ENCODE measurements at regions of chr16 and their contacts with region 1.

Region 1: DNA sequence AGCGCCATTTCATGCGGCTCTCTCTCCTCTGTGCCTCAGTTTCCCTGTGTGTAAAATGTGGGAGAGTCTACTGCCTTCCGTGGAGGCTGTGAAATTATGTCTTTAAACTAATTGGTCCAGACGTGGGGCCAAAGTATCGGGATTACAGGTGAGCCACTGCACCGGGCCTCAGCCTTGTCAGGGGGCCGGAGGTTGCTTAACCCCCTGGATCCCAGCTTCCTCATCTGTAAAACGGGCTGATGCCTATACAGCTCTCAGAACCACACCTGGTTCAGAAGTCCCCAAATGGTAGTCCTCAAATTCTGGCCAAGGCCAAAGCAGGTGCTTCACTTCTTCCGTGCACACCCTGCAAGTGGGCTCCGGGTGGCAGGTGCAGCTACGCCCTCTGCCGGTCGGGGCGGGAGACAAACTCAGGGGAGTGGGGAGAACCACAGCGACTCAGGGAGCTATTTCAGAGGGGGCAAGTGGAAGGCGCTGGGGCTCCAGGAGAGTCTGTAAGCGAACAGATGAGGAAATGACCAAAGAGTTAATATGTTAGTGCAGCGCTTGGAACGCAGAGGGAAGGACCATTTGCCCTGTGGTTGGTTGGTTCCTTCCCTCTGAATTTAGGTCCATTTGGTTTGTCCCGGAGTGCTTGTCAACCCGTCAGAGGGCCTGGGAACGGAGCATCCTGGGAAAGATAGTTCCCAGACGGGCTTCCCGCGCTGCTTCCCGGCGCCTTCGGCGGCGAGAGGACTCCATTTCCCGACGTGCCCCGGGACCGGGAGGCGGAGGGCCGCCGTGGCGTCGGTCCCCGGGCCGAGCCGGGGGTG is at the start of gene MGRN1:
- DNase-seq: peak; percentile 96
- ATAC-seq: peak; percentile 89
- H3K4me3 Mint-ChIP-seq: peak within 1 kb of the TSS; percentile 99
- H3K27ac Mint-ChIP-seq: peak within 1 kb of the TSS; percentile 100
- H3K4me1 Mint-ChIP-seq: peaks cover 38% of the 10 kb centered on the region
- H3K27me3 Mint-ChIP-seq: no peaks in the 10 kb centered on the region
- total RNA-seq, gene MGRN1: 65.0 to 75.4 TPM

Region 2: DNA sequence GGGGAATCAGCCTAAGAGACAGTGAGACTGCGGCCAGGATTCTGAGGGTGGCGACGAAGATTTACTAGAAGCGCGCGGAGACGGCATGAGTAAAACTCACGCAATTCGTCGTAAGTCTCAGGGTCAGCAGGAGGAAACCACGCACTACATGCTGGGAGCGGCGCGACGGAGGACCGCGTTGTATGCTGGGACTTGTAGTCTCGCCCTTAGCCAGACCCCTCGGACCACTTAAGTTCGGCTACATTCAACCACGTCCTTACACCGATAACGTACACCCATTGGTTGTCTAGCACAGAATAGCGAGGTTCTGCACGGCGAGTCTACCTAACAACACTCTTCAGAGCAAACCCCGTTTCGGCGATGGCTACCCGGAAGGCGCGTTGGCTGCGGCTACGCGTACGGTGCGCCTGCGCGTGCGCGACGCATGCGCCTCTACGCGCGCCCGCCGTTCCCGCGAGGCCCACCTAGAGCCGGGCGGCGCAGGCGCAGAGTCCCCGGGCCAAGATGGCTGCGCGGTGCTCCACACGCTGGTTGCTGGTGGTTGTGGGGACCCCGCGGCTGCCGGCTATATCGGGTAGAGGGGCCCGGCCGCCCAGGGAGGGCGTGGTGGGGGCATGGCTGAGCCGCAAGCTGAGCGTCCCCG is 198.7 kb before region 1 on chr16 and contains the start of gene DNAJA3:
- CTCF ChIA-PET with region 1: interaction called, 3 read pairs
- POLR2A ChIA-PET with region 1: no interaction called
- intact Hi-C with region 1: loop called in 1 of 2 experiments (anchors 2 kb)
- DNase-seq: peak; percentile 96
- ATAC-seq: peak; percentile 93
- H3K4me3 Mint-ChIP-seq: peak within 1 kb of the TSS; percentile 95
- H3K27ac Mint-ChIP-seq: peak within 1 kb of the TSS; percentile 98
- H3K4me1 Mint-ChIP-seq: peaks cover 27% of the 10 kb centered on the region
- H3K27me3 Mint-ChIP-seq: no peaks in the 10 kb centered on the region
- total RNA-seq, gene DNAJA3: 93.9 to 102 TPM

Region 3: GRCh38 chr16:4649744-4650442 is 25.7 kb after region 1 on chr16:
- CTCF ChIA-PET with region 1: interaction called, 15 read pairs
- POLR2A ChIA-PET with region 1: interaction called, 3 read pairs
- intact Hi-C with region 1: no loop called
- DNase-seq: peak; percentile 53
- ATAC-seq: peak; percentile 54
- H3K4me3 Mint-ChIP-seq: no peak overlapping the region
- H3K27ac Mint-ChIP-seq: peak overlapping the region; percentile 37
- H3K4me1 Mint-ChIP-seq: peaks cover 31% of the 10 kb centered on the region
- H3K27me3 Mint-ChIP-seq: no peaks in the 10 kb centered on the region

Region 4: DNA sequence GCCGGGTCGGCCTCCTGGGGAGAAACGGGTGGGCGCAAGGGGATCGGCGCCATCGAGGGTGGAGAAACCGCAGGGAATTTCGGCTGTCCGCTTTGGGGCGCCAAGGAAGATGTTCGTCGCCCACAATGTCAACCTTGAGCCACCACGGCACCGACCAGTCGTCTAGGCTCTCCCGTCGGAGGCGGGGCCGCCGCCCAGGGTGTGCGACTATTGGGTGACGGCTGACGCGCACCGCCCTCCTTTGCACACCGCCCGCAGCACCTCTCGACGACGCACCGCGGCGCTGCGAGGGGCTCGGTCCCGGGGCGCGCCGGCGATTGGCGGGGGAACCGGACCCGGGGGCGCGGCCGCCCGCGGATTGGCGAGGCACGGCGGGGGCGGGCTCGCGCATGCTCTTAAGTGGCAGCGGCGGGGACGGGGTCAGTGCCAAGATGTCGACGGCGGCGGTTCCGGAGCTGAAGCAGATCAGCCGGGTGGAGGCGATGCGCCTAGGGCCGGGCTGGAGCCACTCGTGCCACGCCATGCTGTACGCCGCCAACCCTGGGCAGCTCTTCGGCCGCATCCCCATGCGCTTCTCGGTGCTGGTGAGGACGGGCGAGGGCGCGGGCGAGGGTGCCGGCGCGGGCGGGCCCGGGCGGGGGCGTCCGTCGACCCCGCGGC is 69.2 kb after region 1 on chr16 and contains the start of gene NUDT16L1:
- CTCF ChIA-PET with region 1: interaction called, 3 read pairs
- POLR2A ChIA-PET with region 1: no interaction called
- intact Hi-C with region 1: loop called (anchors 1 to 2 kb)
- DNase-seq: peak; percentile 98
- ATAC-seq: peak; percentile 95
- H3K4me3 Mint-ChIP-seq: peak within 1 kb of the TSS; percentile 77
- H3K27ac Mint-ChIP-seq: peak within 1 kb of the TSS; percentile 83
- H3K4me1 Mint-ChIP-seq: peaks cover 17% of the 10 kb centered on the region
- H3K27me3 Mint-ChIP-seq: no peaks in the 10 kb centered on the region
- total RNA-seq, gene NUDT16L1: 16.4 to 22.5 TPM

Region 5: GRCh38 chr16:4802659-4803287 is 178.6 kb after region 1 on chr16:
- CTCF ChIA-PET with region 1: no interaction called
- POLR2A ChIA-PET with region 1: no interaction called
- intact Hi-C with region 1: loop called in 1 of 2 experiments (anchors 2 kb)
- DNase-seq: peak; percentile 92
- ATAC-seq: peak; percentile 98
- H3K4me3 Mint-ChIP-seq: peak overlapping the region; percentile 74
- H3K27ac Mint-ChIP-seq: peak overlapping the region; percentile 58
- H3K4me1 Mint-ChIP-seq: peaks cover 14% of the 10 kb centered on the region
- H3K27me3 Mint-ChIP-seq: no peaks in the 10 kb centered on the region

Region 6: GRCh38 chr16:5033256-5034169 is 409.3 kb after region 1 on chr16 and contains the start of gene NAGPA:
- CTCF ChIA-PET with region 1: no interaction called
- POLR2A ChIA-PET with region 1: no interaction called
- intact Hi-C with region 1: loop called in 1 of 2 experiments (anchors 10 kb)
- DNase-seq: peak; percentile 93
- ATAC-seq: peak; percentile 96
- H3K4me3 Mint-ChIP-seq: peak within 1 kb of the TSS; percentile 85
- H3K27ac Mint-ChIP-seq: peak within 1 kb of the TSS; percentile 80
- H3K4me1 Mint-ChIP-seq: peaks cover 19% of the 10 kb centered on the region
- H3K27me3 Mint-ChIP-seq: no peaks in the 10 kb centered on the region
- total RNA-seq, gene NAGPA: 8.9 to 10.2 TPM

Measured in activated CD4-positive, alpha-beta T cell treated with anti-CD3 and anti-CD28 coated beads for 36 hours (primary cell).